ENCODE measurements at regions of chr12 and their contacts with region 1.

Region 1: GRCh38 chr12:3777206-3777809 is 24.4 kb upstream of the CRACR2A start:
- DNase-seq: no peak
- ATAC-seq: peak; percentile 66 to 86 (median 70)
- H3K4me3 ChIP-seq: no peak overlapping the region
- H3K27ac ChIP-seq: no peak overlapping the region
- H3K4me1 ChIP-seq: no peaks in the 10 kb centered on the region
- H3K27me3 ChIP-seq: no peaks in the 10 kb centered on the region
- CTCF ChIP-seq: peak; percentile 72

Region 2: DNA sequence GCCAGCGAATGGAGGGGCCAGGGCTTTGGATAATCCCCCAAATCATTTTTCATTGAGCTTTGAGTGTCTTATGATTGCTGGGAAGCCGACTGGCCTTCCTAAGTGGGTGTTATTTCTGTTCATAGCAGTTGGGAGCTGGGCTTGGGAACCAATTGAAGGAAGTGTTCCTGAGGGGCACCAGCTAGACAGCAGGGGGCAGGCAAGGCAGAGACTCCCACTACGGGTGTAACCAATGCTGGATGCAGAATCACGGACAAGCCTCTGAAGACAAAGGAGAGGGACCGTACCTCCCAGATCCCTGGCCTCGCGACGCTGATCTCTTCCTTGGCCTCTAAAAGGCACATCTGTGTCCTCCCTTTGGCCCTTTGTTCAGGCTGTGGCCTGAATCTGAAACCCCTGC is 435.3 kb before region 1 on chr12:
- intact Hi-C with region 1: loop called in 1 of 2 experiments (anchors 2 kb)
- DNase-seq: no peak
- ATAC-seq: peak; percentile 34 to 75 (median 65)
- H3K4me3 ChIP-seq: no peak overlapping the region
- H3K27ac ChIP-seq: no peak overlapping the region
- H3K4me1 ChIP-seq: no peaks in the 10 kb centered on the region
- H3K27me3 ChIP-seq: peaks cover 0 to 7% (median 7%) of the 10 kb centered on the region in 3 donors
- CTCF ChIP-seq: peak; percentile 47

Region 3: GRCh38 chr12:3533703-3534386 is 243.5 kb before region 1 on chr12:
- intact Hi-C with region 1: loop called in 1 of 2 experiments (anchors 10 kb)
- DNase-seq: peak in 1 of 2 donors; percentile 78
- ATAC-seq: peak; percentile 42 to 83 (median 66)
- H3K4me3 ChIP-seq: no peak overlapping the region
- H3K27ac ChIP-seq: peak overlapping the region; percentile 23
- H3K4me1 ChIP-seq: peaks cover 26% of the 10 kb centered on the region
- H3K27me3 ChIP-seq: no peaks in the 10 kb centered on the region
- CTCF ChIP-seq: peak; percentile 13

Region 4: DNA sequence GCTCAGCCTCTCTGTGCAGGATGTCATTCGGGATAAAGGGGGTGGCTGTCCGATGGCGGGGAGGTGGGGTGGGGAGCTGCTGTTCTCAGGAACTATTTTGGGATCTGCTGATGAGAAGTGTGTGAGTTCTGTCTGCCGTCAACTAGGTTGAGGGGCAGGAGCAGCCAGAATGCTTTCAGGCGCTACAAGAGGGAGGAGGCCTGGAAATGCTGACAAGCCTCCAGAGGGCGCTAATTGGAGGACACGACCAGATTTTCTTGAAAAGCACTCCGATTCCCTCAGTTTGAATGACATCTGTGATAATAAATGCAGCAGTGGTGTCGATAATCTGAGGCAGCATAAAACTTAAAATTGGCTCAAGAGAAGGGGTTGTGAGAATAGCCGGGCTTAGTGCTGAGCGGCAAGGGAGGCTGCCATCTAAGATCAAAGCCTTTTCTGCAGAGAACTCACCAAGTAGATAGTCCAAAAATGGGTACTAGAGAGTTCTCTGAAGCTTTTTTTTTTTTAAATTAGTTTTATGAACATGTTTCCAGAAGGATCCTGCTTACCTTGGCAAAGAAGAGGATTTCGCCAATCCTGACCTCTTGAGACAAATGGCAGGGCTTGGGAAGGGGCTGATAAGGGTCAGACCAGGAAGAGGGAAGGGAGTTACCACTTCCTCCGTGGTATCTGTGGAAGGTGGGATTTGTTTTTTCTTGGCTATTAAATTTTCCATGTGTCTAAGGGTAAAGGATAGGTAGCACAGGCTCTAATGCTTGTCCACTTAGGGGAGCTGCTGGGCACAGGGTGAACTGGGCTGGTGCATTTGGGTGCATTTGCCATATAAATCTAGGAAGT is 118.8 kb before region 1 on chr12:
- intact Hi-C with region 1: loop called (anchors 5 to 10 kb)
- DNase-seq: no peak
- ATAC-seq: peak in 1 of 4 donors; percentile 40
- H3K4me3 ChIP-seq: no peak overlapping the region
- H3K27ac ChIP-seq: no peak overlapping the region
- H3K4me1 ChIP-seq: no peaks in the 10 kb centered on the region
- H3K27me3 ChIP-seq: no peaks in the 10 kb centered on the region
- CTCF ChIP-seq: no peak

Region 5: GRCh38 chr12:3761116-3761735 is 16.1 kb before region 1 on chr12:
- intact Hi-C with region 1: no loop called
- DNase-seq: no peak
- ATAC-seq: no peak
- H3K4me3 ChIP-seq: no peak overlapping the region
- H3K27ac ChIP-seq: no peak overlapping the region
- H3K4me1 ChIP-seq: no peaks in the 10 kb centered on the region
- H3K27me3 ChIP-seq: no peaks in the 10 kb centered on the region
- CTCF ChIP-seq: no peak

Measured in psoas muscle (tissue), 8 donors.